T-cell (primary cell): ENCODE measurements at regions of chr4 and their contacts with region 1.

Region 1: GRCh38 chr4:103008875-103009729 is 10.4 kb downstream of the SLC9B1 start:
- DNase-seq: peak in 8 of 35 experiments; percentile 10 to 85 (median 28)
- ATAC-seq: peak; percentile 70 to 88 (median 84)
- H3K4me3 ChIP-seq: no peak overlapping the region
- H3K4me3 Mint-ChIP-seq: no peak overlapping the region
- H3K27ac ChIP-seq: no peak overlapping the region
- H3K27ac Mint-ChIP-seq: no peak overlapping the region
- H3K4me1 ChIP-seq: no peaks in the 10 kb centered on the region
- H3K4me1 Mint-ChIP-seq: peaks cover 0 to 7% (median 1%) of the 10 kb centered on the region in 3 donors
- H3K27me3 ChIP-seq: no peaks in the 10 kb centered on the region
- H3K27me3 Mint-ChIP-seq: no peaks in the 10 kb centered on the region

Region 2: DNA sequence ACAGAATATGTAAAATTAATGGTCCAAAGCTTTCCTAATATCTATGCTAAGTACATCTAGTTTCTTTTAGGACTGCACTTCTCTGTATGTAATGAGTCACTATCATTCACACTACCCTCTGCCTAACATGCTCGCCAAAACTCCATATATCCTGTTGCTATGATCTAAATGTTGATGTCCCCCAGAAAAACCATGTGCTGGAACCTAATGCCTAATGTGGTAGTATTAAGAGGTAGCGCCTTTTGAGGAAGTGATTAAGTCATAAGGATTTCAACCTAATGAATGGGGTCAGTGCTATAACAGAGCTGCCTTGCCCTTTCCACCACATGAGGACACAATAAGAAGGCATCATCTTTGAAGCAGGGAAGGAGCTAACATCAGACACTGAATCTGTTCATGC is 542.8 kb before region 1 on chr4:
- CTCF ChIA-PET with region 1: interaction called in 1 of 2 experiments, 13 read pairs
- POLR2A ChIA-PET with region 1: no interaction called
- DNase-seq: no peak
- ATAC-seq: no peak
- H3K4me3 ChIP-seq: no peak overlapping the region
- H3K4me3 Mint-ChIP-seq: no peak overlapping the region
- H3K27ac ChIP-seq: no peak overlapping the region
- H3K27ac Mint-ChIP-seq: no peak overlapping the region
- H3K4me1 ChIP-seq: peaks cover 0 to 31% of the 10 kb centered on the region in 2 experiments
- H3K4me1 Mint-ChIP-seq: peaks cover 23 to 31% (median 29%) of the 10 kb centered on the region in 3 donors
- H3K27me3 ChIP-seq: no peaks in the 10 kb centered on the region
- H3K27me3 Mint-ChIP-seq: no peaks in the 10 kb centered on the region